ENCODE measurements at regions of chr19 and their contacts with region 1.

Region 1: DNA sequence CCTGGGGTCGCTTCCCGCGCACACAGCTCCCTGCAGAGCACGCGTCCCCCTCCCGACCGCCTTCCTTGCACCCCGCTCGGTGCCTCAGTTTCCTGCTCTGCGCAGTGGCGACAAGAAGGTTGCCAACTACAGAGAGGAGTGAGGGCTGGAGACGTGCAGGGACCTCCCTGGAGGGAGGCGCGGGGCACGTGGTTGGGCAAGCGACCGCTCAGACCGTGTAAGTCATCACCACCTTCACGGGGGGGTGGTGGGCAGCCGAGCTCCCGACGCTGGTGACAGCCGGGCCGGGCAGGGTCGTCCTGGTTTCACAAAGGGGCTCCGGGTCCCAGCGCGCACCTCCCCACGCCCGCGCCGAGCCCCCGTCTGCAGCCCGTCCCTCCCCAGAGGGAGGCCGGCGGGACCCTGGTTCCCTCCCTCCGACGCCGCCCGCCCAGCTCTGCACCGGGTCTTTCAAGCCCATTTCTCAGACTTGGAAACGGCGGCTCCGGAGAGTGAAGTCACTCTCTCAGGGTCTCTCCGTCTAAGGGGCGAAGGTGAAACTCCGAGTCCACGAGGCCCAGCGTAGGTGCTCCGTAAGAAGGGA is 801 bp upstream of the ARID3A start:
- DNase-seq: peak in 1 of 2 donors; percentile 69
- H3K4me3 ChIP-seq: peak overlapping the region; percentile 65 to 98 (median 88)
- H3K27ac ChIP-seq: peak overlapping the region; percentile 75 to 91 (median 89)
- H3K4me1 ChIP-seq: peaks cover 28 to 70% (median 51%) of the 10 kb centered on the region in 4 donors
- H3K27me3 ChIP-seq: peaks cover 7 to 15% (median 15%) of the 10 kb centered on the region in 3 donors
- CTCF ChIP-seq: no peak
- EP300 ChIP-seq: no peak
- POLR2A ChIP-seq: no peak

Region 2: GRCh38 chr19:984165-984967 is 59.3 kb after region 1 on chr19 and contains the start of gene WDR18:
- intact Hi-C with region 1: loop called (anchors 5 kb)
- DNase-seq: peak; percentile 94 to 97
- H3K4me3 ChIP-seq: peak within 1 kb of the TSS; percentile 82 to 99 (median 98)
- H3K27ac ChIP-seq: peak within 1 kb of the TSS; percentile 77 to 95 (median 87)
- H3K4me1 ChIP-seq: peaks cover 12 to 41% (median 38%) of the 10 kb centered on the region in 4 donors
- H3K27me3 ChIP-seq: peaks cover 0 to 9% (median 0%) of the 10 kb centered on the region in 3 donors
- CTCF ChIP-seq: peak in 1 of 7 experiments; percentile 41
- EP300 ChIP-seq: no peak
- POLR2A ChIP-seq: peak in 1 of 4 donors; percentile 10
- total RNA-seq, gene WDR18: 19.1 to 410 (median 67.7) TPM

Measured in stomach (tissue), 19 donors.